Calu3 (cell line): ENCODE measurements at regions of chr2 and their contacts with region 1.

Region 1: GRCh38 chr2:200483729-200484198 is 26.1 kb downstream of the KCTD18 start:
- DNase-seq: peak; percentile 70
- H3K4me3 Mint-ChIP-seq: no peak overlapping the region
- H3K27ac Mint-ChIP-seq: no peak overlapping the region
- H3K4me1 Mint-ChIP-seq: peaks cover 37% of the 10 kb centered on the region
- H3K27me3 Mint-ChIP-seq: no peaks in the 10 kb centered on the region
- CTCF ChIP-seq: peak; percentile 62

Region 2: DNA sequence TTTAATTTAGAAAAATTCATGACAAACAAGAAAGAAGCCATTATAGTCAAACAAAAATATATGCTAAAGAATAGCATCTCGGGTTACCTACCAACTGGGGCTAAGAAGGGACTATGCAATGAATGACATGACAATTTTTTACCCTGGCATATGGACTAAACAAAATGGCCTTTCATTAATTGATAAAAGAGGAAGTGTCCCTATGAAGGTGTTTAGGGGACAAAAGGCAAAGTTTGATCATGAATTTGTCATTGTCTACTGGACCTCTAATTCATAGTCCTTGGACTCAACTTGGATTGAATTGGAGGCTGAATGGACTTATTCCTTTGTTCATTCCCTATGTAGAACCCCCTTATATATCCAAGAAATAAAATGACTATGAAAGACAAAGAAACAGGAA is 515.6 kb before region 1 on chr2:
- CTCF ChIA-PET with region 1: interaction called, 5 read pairs
- intact Hi-C with region 1: loop called (anchors 1 kb)
- DNase-seq: no peak
- H3K4me3 Mint-ChIP-seq: no peak overlapping the region
- H3K27ac Mint-ChIP-seq: no peak overlapping the region
- H3K4me1 Mint-ChIP-seq: no peaks in the 10 kb centered on the region
- H3K27me3 Mint-ChIP-seq: no peaks in the 10 kb centered on the region
- CTCF ChIP-seq: no peak

Region 3: GRCh38 chr2:199973703-199974102 is 510.1 kb before region 1 on chr2:
- CTCF ChIA-PET with region 1: interaction called, 5 read pairs
- intact Hi-C with region 1: loop called (anchors 1 kb)
- DNase-seq: no peak
- H3K4me3 Mint-ChIP-seq: no peak overlapping the region
- H3K27ac Mint-ChIP-seq: peak overlapping the region; percentile 48
- H3K4me1 Mint-ChIP-seq: peaks cover 48% of the 10 kb centered on the region
- H3K27me3 Mint-ChIP-seq: no peaks in the 10 kb centered on the region
- CTCF ChIP-seq: peak; percentile 53